ENCODE measurements at regions of chr17 and their contacts with region 1.

Region 1: GRCh38 chr17:43645765-43646481 is 15.8 kb downstream of the MEOX1 start:
- DNase-seq: peak; percentile 61
- H3K4me3 ChIP-seq: peak overlapping the region; percentile 35 to 45 (median 43)
- H3K27ac ChIP-seq: peak overlapping the region; percentile 39
- H3K4me1 ChIP-seq: peaks cover 9% of the 10 kb centered on the region
- H3K27me3 ChIP-seq: no peaks in the 10 kb centered on the region
- CTCF ChIP-seq: peak; percentile 11 to 22
- POLR2A ChIP-seq: no peak

Region 2: DNA sequence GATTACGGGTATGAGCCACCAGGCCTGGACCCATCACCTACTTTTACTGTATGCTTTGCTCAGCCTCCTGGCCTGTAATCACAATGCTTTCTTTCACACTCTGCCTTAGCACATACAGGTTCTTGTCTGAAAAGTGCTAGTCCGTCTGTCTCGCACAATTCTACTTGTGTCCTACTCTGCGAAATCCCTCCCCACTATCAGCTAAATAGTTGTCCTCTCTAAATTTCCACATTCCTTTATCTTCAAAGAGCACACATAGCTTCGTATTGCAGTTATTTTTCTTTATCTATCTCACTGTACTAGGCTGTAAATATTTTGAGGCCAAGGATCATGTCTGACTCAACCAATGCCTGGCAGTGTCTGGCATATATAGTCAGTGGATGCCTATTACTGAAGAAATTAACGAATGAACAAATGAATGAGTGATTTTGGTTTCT is 61.2 kb before region 1 on chr17:
- CTCF ChIA-PET with region 1: no interaction called
- POLR2A ChIA-PET with region 1: no interaction called
- dilution Hi-C with region 1: no loop called
- intact Hi-C with region 1: no loop called
- DNase-seq: peak; percentile 41
- H3K4me3 ChIP-seq: no peak overlapping the region
- H3K27ac ChIP-seq: no peak overlapping the region
- H3K4me1 ChIP-seq: peaks cover 3% of the 10 kb centered on the region
- H3K27me3 ChIP-seq: no peaks in the 10 kb centered on the region
- CTCF ChIP-seq: no peak
- POLR2A ChIP-seq: no peak

Region 3: GRCh38 chr17:43661699-43662412 is 15.9 kb after region 1 on chr17 and contains the start of gene MEOX1:
- CTCF ChIA-PET with region 1: interaction called, 13 read pairs
- POLR2A ChIA-PET with region 1: no interaction called
- dilution Hi-C with region 1: no loop called
- intact Hi-C with region 1: no loop called
- DNase-seq: no peak
- H3K4me3 ChIP-seq: no peak within 1 kb of the TSS
- H3K27ac ChIP-seq: no peak within 1 kb of the TSS
- H3K4me1 ChIP-seq: no peaks in the 10 kb centered on the region
- H3K27me3 ChIP-seq: no peaks in the 10 kb centered on the region
- CTCF ChIP-seq: no peak
- POLR2A ChIP-seq: no peak
- total RNA-seq, gene MEOX1: 0.14 TPM in 1 of 2 replicates, not detected in the other

Measured in endothelial cell of umbilical vein (primary cell).